ENCODE measurements at regions of chrX and their contacts with region 1.

Region 1: DNA sequence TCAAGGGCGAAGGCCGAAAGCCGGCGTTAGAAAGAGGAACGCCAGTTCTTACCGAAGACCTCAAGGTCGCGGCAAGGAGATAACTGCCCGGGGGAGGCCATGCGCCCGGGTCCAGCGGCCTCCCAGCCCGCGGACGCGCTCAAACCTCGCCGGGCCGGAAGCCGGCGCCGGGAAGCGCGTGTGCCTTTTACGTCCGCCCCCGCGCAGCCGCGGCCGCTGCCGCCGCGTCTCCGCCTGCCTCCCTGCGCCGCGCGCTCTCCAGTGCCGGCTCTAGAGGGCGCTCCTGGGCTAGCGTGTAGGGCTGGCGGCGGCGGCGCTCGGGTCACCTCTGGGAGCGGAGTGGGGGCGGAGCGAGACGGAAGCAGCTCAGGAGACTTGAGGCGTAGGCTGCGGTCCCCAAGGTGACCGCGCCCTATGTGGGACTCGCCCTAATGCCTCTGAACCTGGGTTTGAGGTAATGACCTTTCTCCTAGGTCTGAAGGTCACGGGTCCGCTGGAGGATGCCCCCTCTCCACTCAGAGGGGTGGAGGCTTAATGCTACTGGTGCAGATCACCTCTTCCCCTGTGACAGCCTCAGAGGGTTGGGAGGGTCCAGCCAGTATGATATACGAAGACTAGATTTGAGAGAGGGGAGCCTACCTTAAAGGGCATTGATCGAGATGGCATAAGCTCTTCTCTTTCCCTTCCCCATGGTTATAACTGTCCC is 839 bp downstream of the SLC25A5 start:
- DNase-seq: peak; percentile 83
- ATAC-seq: peak; percentile 68
- H3K4me3 ChIP-seq: peak overlapping the region; percentile 98
- H3K27ac ChIP-seq: peak overlapping the region; percentile 72
- H3K4me1 ChIP-seq: peaks cover 8% of the 10 kb centered on the region
- H3K27me3 ChIP-seq: no peaks in the 10 kb centered on the region
- CTCF ChIP-seq: peak; percentile 64

Region 2: GRCh38 chrX:119410027-119410823 is 58.9 kb before region 1 on chrX:
- CTCF ChIA-PET with region 1: no interaction called
- POLR2A ChIA-PET with region 1: no interaction called
- intact Hi-C with region 1: loop called (anchors 5 kb)
- DNase-seq: peak; percentile 90
- ATAC-seq: peak; percentile 92
- H3K4me3 ChIP-seq: no peak overlapping the region
- H3K27ac ChIP-seq: peak overlapping the region; percentile 77
- H3K4me1 ChIP-seq: peaks cover 29% of the 10 kb centered on the region
- H3K27me3 ChIP-seq: no peaks in the 10 kb centered on the region
- CTCF ChIP-seq: no peak